ENCODE measurements at regions of chr10 and their contacts with region 1.

Region 1: DNA sequence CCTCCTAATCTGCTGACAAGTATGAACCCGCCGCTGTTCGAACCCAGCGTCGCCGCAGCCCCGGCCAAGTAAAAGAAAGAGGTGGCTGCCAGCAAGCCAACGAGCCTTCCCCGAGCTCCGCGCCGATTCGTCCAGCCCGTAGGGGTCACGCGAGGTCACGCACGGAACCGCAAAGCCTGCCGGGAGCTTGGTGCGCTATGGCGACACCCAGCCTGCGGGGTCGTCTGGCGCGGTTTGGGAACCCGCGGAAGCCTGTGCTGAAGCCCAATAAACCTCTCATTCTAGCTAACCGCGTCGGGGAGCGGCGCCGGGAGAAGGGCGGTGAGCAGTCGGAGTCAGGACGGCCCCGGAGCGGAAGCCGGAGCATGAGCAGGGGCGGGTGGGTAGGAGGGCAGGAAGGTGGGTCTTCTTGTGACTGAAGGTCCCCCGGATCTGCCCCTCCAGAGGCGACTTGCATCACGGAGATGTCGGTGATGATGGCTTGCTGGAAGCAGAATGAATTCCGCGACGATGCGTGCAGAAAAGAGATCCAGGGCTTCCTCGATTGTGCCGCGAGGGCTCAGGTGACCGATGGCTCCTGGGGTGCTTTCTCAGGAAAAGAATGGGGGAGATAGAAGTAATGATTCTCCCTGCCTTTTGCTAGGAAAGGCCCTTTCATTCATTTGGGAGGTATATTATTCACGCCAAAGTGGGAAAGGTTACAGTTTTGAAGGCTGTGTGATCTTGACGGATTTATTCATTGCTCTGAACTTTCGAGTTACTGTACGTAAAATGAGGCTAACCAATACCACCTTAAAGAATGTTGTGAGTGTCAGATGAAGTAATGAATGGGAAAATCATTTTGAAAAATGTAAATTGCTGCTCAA is at the start of gene CHCHD1:
- DNase-seq: peak; percentile 94
- H3K4me3 ChIP-seq: peak within 1 kb of the TSS; percentile 70 to 92 (median 84)
- H3K27ac ChIP-seq: peak within 1 kb of the TSS; percentile 91 to 98 (median 96)
- H3K4me1 ChIP-seq: peaks cover 18 to 50% (median 40%) of the 10 kb centered on the region in 4 donors
- H3K27me3 ChIP-seq: no peaks in the 10 kb centered on the region
- CTCF ChIP-seq: no peak
- EP300 ChIP-seq: no peak
- POLR2A ChIP-seq: peak; percentile 69
- total RNA-seq, gene CHCHD1: 2.6 to 37.4 (median 17.0) TPM

Region 2: DNA sequence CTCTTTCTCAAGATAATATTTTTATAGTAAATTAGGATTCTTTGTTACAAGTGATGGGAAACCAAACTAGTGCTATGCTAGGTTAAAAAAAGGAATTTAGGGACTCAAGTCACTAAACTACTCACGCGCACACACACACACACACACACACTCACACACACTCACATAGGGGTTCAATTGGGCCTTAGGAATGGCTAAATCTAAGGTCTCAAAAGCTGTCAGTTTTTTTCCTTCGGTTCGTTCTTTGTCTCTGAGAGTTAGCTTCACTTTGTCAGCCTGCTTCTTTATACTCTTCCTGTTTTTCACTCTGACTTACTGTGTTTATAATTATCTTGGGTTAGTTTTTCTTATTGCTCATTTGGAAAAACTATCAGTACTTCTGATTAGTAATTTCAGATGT is 507.8 kb after region 1 on chr10:
- in situ Hi-C with region 1: no loop called
- intact Hi-C with region 1: loop called (anchors 5 kb)
- DNase-seq: no peak
- H3K4me3 ChIP-seq: no peak overlapping the region
- H3K27ac ChIP-seq: peak overlapping the region in 2 of 4 donors; percentile 4 to 23
- H3K4me1 ChIP-seq: peaks cover 0 to 15% (median 4%) of the 10 kb centered on the region in 4 donors
- H3K27me3 ChIP-seq: no peaks in the 10 kb centered on the region
- CTCF ChIP-seq: no peak
- EP300 ChIP-seq: no peak
- POLR2A ChIP-seq: no peak